Sigmoid colon (tissue), 7 donors: ENCODE measurements at regions of chr2 and their contacts with region 1.

Region 1: GRCh38 chr2:219597552-219598307 is at the start of gene STK11IP:
- DNase-seq: peak; percentile 99
- H3K4me3 ChIP-seq: peak within 1 kb of the TSS; percentile 66 to 76 (median 72)
- H3K27ac ChIP-seq: peak within 1 kb of the TSS; percentile 80 to 94 (median 92)
- H3K4me1 ChIP-seq: peaks cover 0 to 20% (median 11%) of the 10 kb centered on the region in 4 donors
- H3K27me3 ChIP-seq: no peaks in the 10 kb centered on the region
- CTCF ChIP-seq: no peak
- EP300 ChIP-seq: peak in 2 of 4 donors; percentile 26 to 28
- POLR2A ChIP-seq: peak; percentile 82
- total RNA-seq, gene STK11IP: 8.4 to 13.0 (median 10.1) TPM

Region 2: GRCh38 chr2:219469186-219469724 is 128.5 kb before region 1 on chr2:
- intact Hi-C with region 1: no loop called
- DNase-seq: no peak
- H3K4me3 ChIP-seq: no peak overlapping the region
- H3K27ac ChIP-seq: peak overlapping the region; percentile 77 to 99 (median 99)
- H3K4me1 ChIP-seq: peaks cover 0 to 60% (median 55%) of the 10 kb centered on the region in 4 donors
- H3K27me3 ChIP-seq: no peaks in the 10 kb centered on the region
- CTCF ChIP-seq: no peak
- EP300 ChIP-seq: no peak
- POLR2A ChIP-seq: no peak

Region 3: DNA sequence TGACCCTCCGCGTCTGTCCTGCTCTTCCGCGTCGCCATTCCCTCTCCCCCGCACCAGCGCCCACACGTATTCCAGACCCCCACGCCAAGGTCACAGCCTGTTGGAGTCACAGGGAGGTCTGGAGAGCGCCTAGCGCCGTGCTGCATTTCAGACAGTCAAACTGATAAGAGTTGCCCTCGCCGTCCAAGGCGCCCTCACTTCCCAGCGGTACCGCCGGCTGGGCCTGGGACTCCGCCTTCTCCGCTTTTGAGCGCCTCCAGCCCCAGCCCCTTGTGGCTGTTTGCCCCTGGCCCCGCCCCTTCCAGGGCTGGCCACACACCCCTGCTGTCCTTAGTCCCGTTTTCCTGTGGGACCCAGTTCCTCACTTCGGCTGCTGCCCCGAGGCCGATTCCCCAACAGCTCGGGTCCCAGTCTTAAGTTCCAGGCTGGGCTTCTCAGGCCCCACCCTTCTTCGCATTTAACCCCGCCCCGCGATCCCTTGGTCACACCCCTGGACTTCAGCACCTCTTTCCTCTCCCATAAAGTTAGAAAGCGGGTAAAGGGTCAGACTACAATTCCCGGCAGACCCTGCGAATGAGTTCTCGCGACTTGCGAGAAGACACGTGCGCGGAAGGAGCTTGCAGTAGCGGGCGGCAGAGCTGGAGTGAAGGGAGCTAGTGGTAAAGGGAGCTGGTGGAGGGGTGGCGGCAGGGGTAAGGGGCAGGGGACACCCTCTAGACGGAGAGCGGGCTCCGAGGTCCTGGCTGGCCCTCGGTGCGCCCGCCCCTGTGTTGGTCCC is 99.3 kb before region 1 on chr2 and contains the start of gene GMPPA:
- intact Hi-C with region 1: loop called (anchors 2 kb)
- DNase-seq: peak; percentile 99
- H3K4me3 ChIP-seq: peak within 1 kb of the TSS; percentile 62 to 76 (median 70)
- H3K27ac ChIP-seq: peak within 1 kb of the TSS; percentile 89 to 100 (median 99)
- H3K4me1 ChIP-seq: peaks cover 0 to 53% (median 43%) of the 10 kb centered on the region in 4 donors
- H3K27me3 ChIP-seq: no peaks in the 10 kb centered on the region
- CTCF ChIP-seq: no peak
- EP300 ChIP-seq: peak in 1 of 4 donors; percentile 64
- POLR2A ChIP-seq: peak; percentile 49 to 68
- total RNA-seq, gene GMPPA: 13.9 to 24.7 (median 21.3) TPM

Region 4: DNA sequence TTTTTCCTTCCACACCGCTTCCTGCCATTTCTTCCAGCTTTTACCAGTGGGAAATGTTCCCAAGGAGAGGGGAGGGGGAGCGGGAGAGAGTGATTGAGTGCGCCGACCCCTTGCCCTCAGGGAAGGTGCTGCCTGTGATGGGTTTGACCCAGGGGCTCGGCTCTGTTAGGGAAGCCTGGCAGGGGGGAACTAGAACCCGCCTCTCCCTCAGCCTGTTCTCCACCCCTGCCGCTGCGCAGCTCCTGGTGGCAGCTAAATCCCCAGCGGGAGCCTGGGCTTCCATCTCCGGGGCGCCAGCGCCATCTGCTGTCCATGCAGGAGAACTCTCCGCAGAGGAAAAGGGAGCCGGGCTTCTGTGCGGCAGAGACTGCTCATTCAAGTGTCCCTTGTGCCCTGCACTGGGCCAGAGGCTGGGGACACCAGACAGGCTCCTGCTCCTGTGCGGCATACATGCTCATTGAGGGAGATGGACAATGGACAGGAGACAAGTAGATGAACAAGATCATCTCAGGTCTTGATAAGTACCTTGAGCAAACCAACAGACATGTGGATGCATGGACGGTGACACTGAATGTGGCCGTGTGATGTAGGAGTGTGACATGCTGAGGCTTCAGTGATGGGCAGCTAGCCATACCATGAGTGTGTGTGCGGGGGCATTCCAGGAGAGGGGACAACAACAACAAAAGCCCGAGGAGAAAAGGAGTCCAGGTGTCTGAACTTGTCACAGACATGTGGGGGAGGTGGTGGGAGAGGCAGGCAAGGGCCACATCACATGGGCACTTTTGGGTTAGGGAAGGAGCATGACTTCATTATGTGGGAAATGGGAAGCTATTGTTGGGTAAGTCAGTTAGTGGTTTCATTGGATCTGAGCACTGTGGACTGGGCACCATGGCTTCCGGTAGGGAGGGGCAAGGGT is 67.4 kb before region 1 on chr2:
- intact Hi-C with region 1: no loop called
- DNase-seq: peak; percentile 93
- H3K4me3 ChIP-seq: peak overlapping the region in 2 of 4 donors; percentile 19 to 24
- H3K27ac ChIP-seq: peak overlapping the region in 1 of 4 donors; percentile 34
- H3K4me1 ChIP-seq: peaks cover 0 to 9% (median 3%) of the 10 kb centered on the region in 4 donors
- H3K27me3 ChIP-seq: no peaks in the 10 kb centered on the region
- CTCF ChIP-seq: peak; percentile 96 to 98 (median 98)
- EP300 ChIP-seq: no peak
- POLR2A ChIP-seq: no peak

Region 5: DNA sequence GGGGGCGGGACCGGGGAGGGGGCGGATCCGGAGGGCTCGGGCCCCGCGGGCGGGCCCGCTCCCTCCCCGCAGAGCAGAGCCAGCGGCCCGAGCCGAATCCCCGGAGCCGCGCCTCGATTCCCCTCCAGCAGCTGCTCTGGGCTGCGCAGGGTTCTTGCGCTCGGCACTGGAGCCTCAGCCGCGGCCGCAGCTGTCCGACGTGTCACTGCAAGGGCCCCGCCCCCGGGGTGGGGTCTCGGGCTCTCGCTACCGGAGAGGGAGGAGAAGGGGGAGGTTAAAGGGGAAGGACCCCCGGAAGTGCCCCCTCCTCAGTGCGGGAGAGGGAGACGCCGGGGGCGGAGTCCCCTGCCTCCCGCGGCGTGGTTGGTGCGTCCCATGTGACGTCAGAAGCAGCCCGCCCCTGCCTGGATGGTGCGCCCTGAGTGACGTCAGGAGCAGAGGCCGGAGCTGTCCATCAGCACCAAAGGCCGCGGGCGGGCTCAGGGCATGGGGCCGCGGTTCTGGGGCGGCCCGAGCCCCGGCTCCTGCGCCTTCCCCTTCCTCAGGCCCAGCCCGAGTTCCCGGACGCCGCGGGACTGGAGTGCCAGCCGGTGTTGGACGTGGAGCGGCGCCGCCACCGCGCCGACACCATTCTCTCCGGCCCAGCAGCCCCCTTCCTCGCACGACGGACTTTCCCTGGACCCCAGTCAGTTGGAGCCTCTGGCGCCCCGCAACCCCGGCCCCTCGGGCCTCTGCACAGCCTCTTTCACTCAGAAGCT is 54.0 kb before region 1 on chr2 and contains the starts of genes CHPF and TMEM198:
- intact Hi-C with region 1: loop called (anchors 2 kb)
- DNase-seq: peak; percentile 100
- H3K4me3 ChIP-seq: peak within 1 kb of the TSS; percentile 47 to 92 (median 74)
- H3K27ac ChIP-seq: peak within 1 kb of the TSS; percentile 90 to 97 (median 92)
- H3K4me1 ChIP-seq: peaks cover 0 to 31% (median 25%) of the 10 kb centered on the region in 4 donors
- H3K27me3 ChIP-seq: no peaks in the 10 kb centered on the region
- CTCF ChIP-seq: no peak
- EP300 ChIP-seq: peak in 1 of 4 donors; percentile 7
- POLR2A ChIP-seq: peak; percentile 33 to 49
- total RNA-seq, gene CHPF: 12.5 to 39.1 (median 23.5) TPM
- total RNA-seq, gene TMEM198: 0.71 to 3.0 (median 1.6) TPM

Region 6: GRCh38 chr2:219552382-219553167 is 45.2 kb before region 1 on chr2:
- intact Hi-C with region 1: loop called (anchors 1 kb)
- DNase-seq: peak; percentile 93
- H3K4me3 ChIP-seq: peak overlapping the region; percentile 49 to 64 (median 56)
- H3K27ac ChIP-seq: peak overlapping the region; percentile 50 to 78 (median 66)
- H3K4me1 ChIP-seq: peaks cover 0 to 27% (median 21%) of the 10 kb centered on the region in 4 donors
- H3K27me3 ChIP-seq: peaks cover 0 to 13% (median 0%) of the 10 kb centered on the region in 3 donors
- CTCF ChIP-seq: no peak
- EP300 ChIP-seq: no peak
- POLR2A ChIP-seq: no peak

Region 7: GRCh38 chr2:219571311-219572236 is 26.2 kb before region 1 on chr2 and contains the start of gene OBSL1:
- intact Hi-C with region 1: loop called (anchors 1 kb)
- DNase-seq: peak; percentile 83
- H3K4me3 ChIP-seq: peak within 1 kb of the TSS; percentile 66 to 69 (median 68)
- H3K27ac ChIP-seq: peak within 1 kb of the TSS; percentile 86 to 91 (median 88)
- H3K4me1 ChIP-seq: peaks cover 0 to 15% (median 13%) of the 10 kb centered on the region in 4 donors
- H3K27me3 ChIP-seq: peaks cover 0 to 17% (median 0%) of the 10 kb centered on the region in 3 donors
- CTCF ChIP-seq: no peak
- EP300 ChIP-seq: no peak
- POLR2A ChIP-seq: no peak
- total RNA-seq, gene OBSL1: 34.6 to 83.6 (median 53.3) TPM

Region 8: DNA sequence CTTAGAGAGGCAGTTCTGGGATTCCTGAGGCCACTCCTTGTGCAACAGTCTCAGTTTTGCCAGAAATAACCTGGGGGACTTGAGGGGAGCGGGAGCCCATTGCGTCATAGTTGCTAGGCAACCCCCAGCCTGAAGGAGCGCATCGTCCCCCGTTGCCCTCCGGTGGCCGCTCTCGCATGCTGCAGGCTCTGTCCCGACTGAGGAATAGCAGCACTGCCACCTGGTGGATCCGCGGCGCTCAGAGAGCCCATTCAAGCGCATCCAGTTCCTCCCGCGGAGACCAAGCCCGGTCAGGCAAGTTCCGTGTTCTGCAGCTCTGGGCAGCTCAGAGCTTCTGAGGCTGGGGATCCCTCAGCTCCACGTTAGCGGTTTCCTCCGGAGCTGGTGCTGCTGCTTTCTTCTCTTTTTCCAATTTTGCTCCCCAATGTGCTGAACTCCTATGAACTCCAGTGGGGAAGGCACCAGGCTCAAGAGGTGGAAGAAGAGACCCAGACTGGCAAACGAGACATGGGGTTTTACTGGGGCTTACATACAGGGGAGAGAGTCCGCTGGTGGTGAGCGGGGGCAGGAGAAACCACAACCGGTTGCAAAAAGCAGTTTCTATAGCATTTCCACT is 44.8 kb after region 1 on chr2:
- intact Hi-C with region 1: loop called (anchors 1 kb)
- DNase-seq: peak; percentile 99
- H3K4me3 ChIP-seq: no peak overlapping the region
- H3K27ac ChIP-seq: peak overlapping the region in 1 of 4 donors; percentile 30
- H3K4me1 ChIP-seq: peaks cover 0 to 25% (median 17%) of the 10 kb centered on the region in 4 donors
- H3K27me3 ChIP-seq: no peaks in the 10 kb centered on the region
- CTCF ChIP-seq: peak; percentile 99 to 100 (median 100)
- EP300 ChIP-seq: no peak
- POLR2A ChIP-seq: no peak